ENCODE measurements at regions of chr4 and their contacts with region 1.

Region 1: GRCh38 chr4:24584175-24584850 is at the start of gene DHX15:
- DNase-seq: peak; percentile 96
- ATAC-seq: peak; percentile 94
- H3K4me3 Mint-ChIP-seq: peak within 1 kb of the TSS; percentile 94
- H3K27ac Mint-ChIP-seq: peak within 1 kb of the TSS; percentile 99
- H3K4me1 Mint-ChIP-seq: peaks cover 33% of the 10 kb centered on the region
- H3K27me3 Mint-ChIP-seq: no peaks in the 10 kb centered on the region
- total RNA-seq, gene DHX15: 201 to 210 TPM

Region 2: GRCh38 chr4:24514803-24515202 is 69.5 kb before region 1 on chr4:
- CTCF ChIA-PET with region 1: no interaction called
- POLR2A ChIA-PET with region 1: no interaction called
- intact Hi-C with region 1: loop called in 1 of 2 experiments (anchors 5 kb)
- DNase-seq: no peak
- ATAC-seq: no peak
- H3K4me3 Mint-ChIP-seq: no peak overlapping the region
- H3K27ac Mint-ChIP-seq: no peak overlapping the region
- H3K4me1 Mint-ChIP-seq: peaks cover 20% of the 10 kb centered on the region
- H3K27me3 Mint-ChIP-seq: no peaks in the 10 kb centered on the region

Region 3: DNA sequence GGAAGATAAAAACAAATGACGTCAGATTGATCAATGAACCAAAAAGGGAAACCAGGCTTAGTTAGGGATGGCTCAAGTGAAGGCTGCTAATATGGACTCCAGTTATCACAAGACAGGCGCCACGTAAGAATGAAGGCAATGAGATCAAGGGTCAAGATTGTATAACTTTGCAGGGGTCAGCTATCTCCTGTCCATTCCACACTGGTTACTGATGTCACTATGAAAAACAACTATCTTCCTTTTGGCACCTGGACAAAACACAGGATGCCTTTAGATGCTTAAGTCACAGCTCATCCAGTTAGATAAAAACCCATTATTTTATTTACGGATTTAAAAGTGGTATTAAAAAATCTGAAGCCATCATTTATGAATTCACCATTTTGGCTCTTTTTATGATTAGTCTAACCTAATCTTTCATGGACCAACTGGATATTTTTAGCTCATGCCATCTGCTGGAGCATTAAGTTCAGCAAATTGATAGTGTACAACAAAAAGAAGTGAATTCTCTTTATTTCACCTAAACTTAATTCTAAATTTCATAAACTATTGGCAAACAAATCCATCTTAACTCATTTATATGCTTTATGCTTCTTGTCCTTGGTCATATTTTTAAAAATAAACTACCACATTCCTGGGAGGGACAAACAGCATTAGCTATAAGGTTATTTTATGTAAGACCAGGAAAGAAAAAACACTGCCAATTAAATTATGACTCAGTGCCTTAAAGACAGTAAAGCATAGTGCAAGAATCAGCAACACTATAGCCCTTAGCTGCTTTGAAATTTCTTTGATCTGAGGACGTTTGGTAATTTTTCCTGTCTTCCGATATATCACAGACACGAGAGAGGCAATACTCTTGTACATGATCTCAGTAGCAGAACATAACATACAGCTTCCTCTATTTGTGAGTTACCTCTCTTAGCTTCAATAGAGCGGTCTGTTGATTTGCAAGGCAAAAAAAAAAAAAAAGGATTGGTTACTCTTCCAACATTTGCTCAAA is 27.0 kb before region 1 on chr4:
- CTCF ChIA-PET with region 1: interaction called, 3 read pairs
- POLR2A ChIA-PET with region 1: no interaction called
- intact Hi-C with region 1: loop called (anchors 2 kb)
- DNase-seq: no peak
- ATAC-seq: peak; percentile 85
- H3K4me3 Mint-ChIP-seq: peak overlapping the region; percentile 23
- H3K27ac Mint-ChIP-seq: peak overlapping the region; percentile 81
- H3K4me1 Mint-ChIP-seq: peaks cover 66% of the 10 kb centered on the region
- H3K27me3 Mint-ChIP-seq: no peaks in the 10 kb centered on the region

Region 4: DNA sequence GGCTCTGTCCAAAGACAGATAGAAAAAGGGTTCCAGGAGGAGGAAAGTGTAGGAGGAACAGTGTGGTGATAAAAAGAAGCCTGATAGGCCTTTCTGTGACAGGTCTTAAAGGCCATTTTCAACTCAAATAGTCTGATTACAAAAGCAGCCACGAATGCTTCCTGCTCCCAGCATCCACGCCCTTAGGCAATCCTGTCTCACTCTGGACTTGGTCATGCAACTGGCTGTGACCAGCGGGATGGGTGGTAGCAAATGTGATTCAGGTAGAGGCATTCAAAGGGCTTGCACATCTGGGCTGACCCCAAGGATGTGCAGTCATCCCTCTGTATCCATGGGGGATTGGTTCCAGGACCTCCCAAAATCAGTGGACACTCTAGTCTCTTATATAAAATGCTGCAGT is 590.4 kb after region 1 on chr4:
- CTCF ChIA-PET with region 1: no interaction called
- POLR2A ChIA-PET with region 1: no interaction called
- intact Hi-C with region 1: loop called in 1 of 2 experiments (anchors 5 kb)
- DNase-seq: no peak
- ATAC-seq: no peak
- H3K4me3 Mint-ChIP-seq: no peak overlapping the region
- H3K27ac Mint-ChIP-seq: no peak overlapping the region
- H3K4me1 Mint-ChIP-seq: peaks cover 30% of the 10 kb centered on the region
- H3K27me3 Mint-ChIP-seq: no peaks in the 10 kb centered on the region

Region 5: DNA sequence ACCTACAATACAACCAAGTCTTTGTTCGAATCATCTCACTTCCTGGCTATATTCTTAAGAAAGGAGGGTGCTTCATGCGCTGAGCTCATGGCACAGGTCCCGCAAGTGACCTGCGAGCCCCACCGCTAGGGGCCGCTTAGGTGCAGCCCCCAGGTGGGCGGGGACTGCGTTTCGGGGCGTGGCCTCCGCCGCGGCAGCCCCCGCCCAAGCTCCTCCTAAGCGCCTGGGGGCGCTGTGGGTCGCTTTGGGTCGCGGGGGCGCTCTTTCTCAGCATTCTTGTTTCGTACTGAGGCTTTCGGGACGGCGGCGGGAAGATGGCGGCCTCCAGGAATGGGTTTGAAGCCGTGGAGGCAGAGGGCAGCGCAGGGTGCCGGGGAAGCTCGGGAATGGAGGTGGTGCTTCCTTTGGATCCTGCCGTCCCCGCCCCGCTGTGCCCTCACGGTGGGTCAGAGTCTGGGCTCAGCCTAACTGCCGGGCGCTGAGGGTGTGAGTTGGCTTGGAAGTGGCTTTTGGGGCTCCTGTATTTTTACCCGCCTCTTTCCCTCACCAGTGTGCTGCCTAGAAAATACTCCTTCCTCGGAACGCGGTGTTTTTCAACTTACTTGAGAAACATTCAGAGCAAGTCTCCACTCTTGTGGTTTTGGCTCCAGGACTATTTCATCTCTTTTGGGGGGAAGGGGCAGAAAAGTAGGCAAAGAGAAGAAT is 728.3 kb after region 1 on chr4 and contains the start of gene ZCCHC4:
- CTCF ChIA-PET with region 1: interaction called, 3 read pairs
- POLR2A ChIA-PET with region 1: no interaction called
- intact Hi-C with region 1: loop called in 1 of 2 experiments (anchors 1 kb)
- DNase-seq: peak; percentile 94
- ATAC-seq: peak; percentile 99
- H3K4me3 Mint-ChIP-seq: peak within 1 kb of the TSS; percentile 96
- H3K27ac Mint-ChIP-seq: peak within 1 kb of the TSS; percentile 94
- H3K4me1 Mint-ChIP-seq: peaks cover 22% of the 10 kb centered on the region
- H3K27me3 Mint-ChIP-seq: peaks cover 3% of the 10 kb centered on the region
- total RNA-seq, gene ZCCHC4: 11.7 to 12.3 TPM

Region 6: DNA sequence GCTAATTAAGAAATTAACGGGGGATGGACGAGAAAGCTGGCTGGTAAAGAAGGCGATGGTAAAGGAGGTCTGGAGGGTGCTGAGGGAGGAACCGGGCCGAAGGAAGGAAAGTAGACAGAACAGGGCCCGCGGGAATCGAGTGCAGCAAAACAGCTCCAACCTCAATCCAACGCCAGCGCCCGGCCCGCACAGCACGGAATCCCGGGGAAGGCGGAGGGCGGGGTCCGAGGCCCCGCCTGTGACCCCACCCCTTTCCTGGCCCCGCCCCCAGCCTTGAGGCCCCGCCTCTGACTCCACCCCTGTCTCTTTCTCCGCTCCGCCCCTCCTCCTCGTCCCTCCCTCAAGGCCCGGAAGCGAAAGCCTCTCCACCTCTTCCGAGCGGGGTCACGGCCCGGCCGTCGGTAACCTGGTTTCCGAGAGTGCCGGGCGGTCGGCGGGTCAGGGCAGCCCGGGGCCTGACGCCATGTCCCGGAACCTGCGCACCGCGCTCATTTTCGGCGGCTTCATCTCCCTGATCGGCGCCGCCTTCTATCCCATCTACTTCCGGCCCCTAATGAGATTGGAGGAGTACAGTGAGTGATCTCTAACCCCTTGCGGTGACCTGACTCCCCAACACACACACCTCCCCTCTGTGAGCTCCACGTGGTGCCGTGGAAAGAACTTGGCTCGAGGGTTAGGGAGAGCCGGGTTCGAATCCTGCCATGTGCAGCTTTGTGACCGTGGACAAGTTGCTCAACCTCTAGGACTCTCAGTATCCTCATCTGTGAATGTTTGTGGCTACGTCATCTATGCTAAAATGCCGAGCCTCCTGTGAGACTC is 1329.7 kb after region 1 on chr4 and contains the start of gene SMIM20:
- CTCF ChIA-PET with region 1: no interaction called
- POLR2A ChIA-PET with region 1: no interaction called
- intact Hi-C with region 1: loop called in 1 of 2 experiments (anchors 2 kb)
- DNase-seq: peak; percentile 94
- ATAC-seq: peak; percentile 96
- H3K4me3 Mint-ChIP-seq: peak within 1 kb of the TSS; percentile 93
- H3K27ac Mint-ChIP-seq: peak within 1 kb of the TSS; percentile 93
- H3K4me1 Mint-ChIP-seq: peaks cover 22% of the 10 kb centered on the region
- H3K27me3 Mint-ChIP-seq: no peaks in the 10 kb centered on the region
- total RNA-seq, gene SMIM20: 15.6 to 23.0 TPM